Activated CD4-positive, alpha-beta T cell treated with anti-CD3 and anti-CD28 coated beads for 36 hours (primary cell): ENCODE measurements at regions of chr17 and their contacts with region 1.

Region 1: DNA sequence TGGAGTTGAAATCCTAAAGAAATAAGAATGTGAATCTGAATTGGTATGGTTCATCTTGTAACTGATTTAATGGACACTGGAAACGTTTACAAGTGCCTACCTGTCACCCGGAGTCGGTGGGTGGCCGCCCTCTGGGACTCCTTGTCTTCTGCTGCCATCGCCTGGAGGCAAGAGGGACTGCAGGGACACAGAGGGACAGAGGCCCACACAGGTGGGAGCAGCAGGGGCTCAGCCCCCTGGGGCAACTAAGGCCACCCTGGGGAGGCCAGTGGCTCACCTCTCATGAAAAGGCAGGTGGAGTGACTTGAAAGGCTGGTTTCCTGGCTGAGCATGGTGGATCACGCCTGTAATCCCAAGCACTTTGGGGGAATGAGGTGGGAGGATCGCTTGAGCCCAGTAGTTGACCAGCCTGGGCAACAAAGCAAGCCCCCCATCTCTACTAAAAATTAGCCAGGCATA is 23.2 kb downstream of the TMEM92 start:
- DNase-seq: peak; percentile 91
- ATAC-seq: peak; percentile 99
- H3K4me3 Mint-ChIP-seq: no peak overlapping the region
- H3K27ac Mint-ChIP-seq: no peak overlapping the region
- H3K4me1 Mint-ChIP-seq: no peaks in the 10 kb centered on the region
- H3K27me3 Mint-ChIP-seq: peaks cover 3% of the 10 kb centered on the region

Region 2: GRCh38 chr17:50114849-50115357 is 182.5 kb before region 1 on chr17:
- CTCF ChIA-PET with region 1: interaction called, 3 read pairs
- POLR2A ChIA-PET with region 1: no interaction called
- intact Hi-C with region 1: loop called in 1 of 2 experiments (anchors 2 kb)
- DNase-seq: peak; percentile 65
- ATAC-seq: peak; percentile 76
- H3K4me3 Mint-ChIP-seq: no peak overlapping the region
- H3K27ac Mint-ChIP-seq: no peak overlapping the region
- H3K4me1 Mint-ChIP-seq: peaks cover 7% of the 10 kb centered on the region
- H3K27me3 Mint-ChIP-seq: peaks cover 31% of the 10 kb centered on the region

Region 3: DNA sequence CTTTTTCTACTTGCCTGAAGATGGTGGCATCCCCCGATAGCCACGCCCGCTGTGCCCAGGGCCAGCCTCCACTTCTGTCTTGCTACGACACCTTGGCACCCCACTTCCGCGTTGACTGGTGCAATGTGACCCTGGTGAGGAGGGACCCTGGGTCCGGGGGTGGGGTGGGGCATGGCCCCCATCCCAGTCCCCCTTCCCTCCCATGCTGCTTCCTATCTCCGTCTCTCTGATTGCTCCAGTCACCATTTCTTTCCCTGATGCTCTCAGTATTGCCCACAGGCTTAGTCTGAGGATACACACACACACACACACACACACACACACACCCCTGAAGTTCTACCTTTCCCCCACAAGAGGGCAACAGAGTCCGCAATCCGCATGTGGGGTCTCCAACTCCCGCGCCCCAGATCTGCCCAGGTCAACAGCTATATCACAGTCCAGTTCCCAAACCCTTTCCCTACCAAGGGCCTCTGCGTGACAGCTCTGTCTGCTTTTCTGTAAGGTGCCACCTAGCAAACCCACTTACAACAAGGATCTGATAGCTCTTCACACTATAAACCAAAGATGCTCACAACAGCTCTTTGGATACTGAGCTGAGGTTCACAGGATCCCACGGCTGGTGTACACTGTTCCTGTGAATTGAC is 128.2 kb before region 1 on chr17:
- CTCF ChIA-PET with region 1: interaction called, 10 read pairs
- POLR2A ChIA-PET with region 1: interaction called, 4 read pairs
- intact Hi-C with region 1: loop called in 1 of 2 experiments (anchors 1 kb)
- DNase-seq: peak; percentile 66
- ATAC-seq: peak; percentile 77
- H3K4me3 Mint-ChIP-seq: peak overlapping the region; percentile 11
- H3K27ac Mint-ChIP-seq: peak overlapping the region; percentile 11
- H3K4me1 Mint-ChIP-seq: peaks cover 9% of the 10 kb centered on the region
- H3K27me3 Mint-ChIP-seq: no peaks in the 10 kb centered on the region

Region 4: GRCh38 chr17:50269477-50270434 is 27.7 kb before region 1 on chr17:
- CTCF ChIA-PET with region 1: interaction called, 11 read pairs
- POLR2A ChIA-PET with region 1: no interaction called
- intact Hi-C with region 1: loop called (anchors 1 to 2 kb)
- DNase-seq: peak; percentile 86
- ATAC-seq: peak; percentile 97
- H3K4me3 Mint-ChIP-seq: no peak overlapping the region
- H3K27ac Mint-ChIP-seq: no peak overlapping the region
- H3K4me1 Mint-ChIP-seq: peaks cover 5% of the 10 kb centered on the region
- H3K27me3 Mint-ChIP-seq: peaks cover 16% of the 10 kb centered on the region